Dorsolateral prefrontal cortex (tissue), 120 donors: ENCODE measurements at regions of chr1 and their contacts with region 1.

Region 1: GRCh38 chr1:156020292-156021089 is at the start of gene SSR2:
- DNase-seq: peak; percentile 79 to 93 (median 90)
- H3K4me3 ChIP-seq: peak within 1 kb of the TSS; percentile 59 to 96 (median 86)
- H3K27ac ChIP-seq: peak within 1 kb of the TSS in 55 of 59 donors; percentile 2 to 92 (median 78)
- H3K27me3 ChIP-seq: no peaks in the 10 kb centered on the region
- CTCF ChIP-seq: peak in 21 of 56 donors; percentile 4 to 41 (median 23)
- total RNA-seq, gene SSR2: 55.2 to 94.2 (median 71.4) TPM

Region 2: GRCh38 chr1:155227261-155228095 is 793.0 kb before region 1 on chr1:
- intact Hi-C with region 1: no loop called
- DNase-seq: peak; percentile 97 to 99 (median 99)
- H3K4me3 ChIP-seq: peak overlapping the region; percentile 48 to 97 (median 74)
- H3K27ac ChIP-seq: peak overlapping the region; percentile 75 to 97 (median 93)
- H3K27me3 ChIP-seq: no peaks in the 10 kb centered on the region
- CTCF ChIP-seq: peak in 18 of 56 donors; percentile 4 to 39 (median 18)

Region 3: GRCh38 chr1:155951753-155952504 is 68.6 kb before region 1 on chr1:
- intact Hi-C with region 1: no loop called
- DNase-seq: no peak
- H3K4me3 ChIP-seq: no peak overlapping the region
- H3K27ac ChIP-seq: peak overlapping the region in 44 of 59 donors; percentile 4 to 72 (median 52)
- H3K27me3 ChIP-seq: no peaks in the 10 kb centered on the region
- CTCF ChIP-seq: no peak

Region 4: GRCh38 chr1:156082309-156083091 is 62.0 kb after region 1 on chr1 and contains the start of gene MEX3A:
- intact Hi-C with region 1: loop called in 1 of 2 experiments (anchors 2 kb)
- DNase-seq: peak; percentile 71 to 90 (median 76)
- H3K4me3 ChIP-seq: peak within 1 kb of the TSS; percentile 68 to 94 (median 84)
- H3K27ac ChIP-seq: peak within 1 kb of the TSS in 36 of 59 donors; percentile 6 to 86 (median 46)
- H3K27me3 ChIP-seq: no peaks in the 10 kb centered on the region
- CTCF ChIP-seq: peak in 19 of 56 donors; percentile 7 to 47 (median 23)
- total RNA-seq, gene MEX3A: 0.44 to 4.6 (median 1.3) TPM